ENCODE measurements at regions of chr17 and their contacts with region 1.

Region 1: GRCh38 chr17:55533608-55534007 is 22.4 kb upstream of the SMIM36 start:
- DNase-seq: no peak
- ATAC-seq: no peak

Region 2: DNA sequence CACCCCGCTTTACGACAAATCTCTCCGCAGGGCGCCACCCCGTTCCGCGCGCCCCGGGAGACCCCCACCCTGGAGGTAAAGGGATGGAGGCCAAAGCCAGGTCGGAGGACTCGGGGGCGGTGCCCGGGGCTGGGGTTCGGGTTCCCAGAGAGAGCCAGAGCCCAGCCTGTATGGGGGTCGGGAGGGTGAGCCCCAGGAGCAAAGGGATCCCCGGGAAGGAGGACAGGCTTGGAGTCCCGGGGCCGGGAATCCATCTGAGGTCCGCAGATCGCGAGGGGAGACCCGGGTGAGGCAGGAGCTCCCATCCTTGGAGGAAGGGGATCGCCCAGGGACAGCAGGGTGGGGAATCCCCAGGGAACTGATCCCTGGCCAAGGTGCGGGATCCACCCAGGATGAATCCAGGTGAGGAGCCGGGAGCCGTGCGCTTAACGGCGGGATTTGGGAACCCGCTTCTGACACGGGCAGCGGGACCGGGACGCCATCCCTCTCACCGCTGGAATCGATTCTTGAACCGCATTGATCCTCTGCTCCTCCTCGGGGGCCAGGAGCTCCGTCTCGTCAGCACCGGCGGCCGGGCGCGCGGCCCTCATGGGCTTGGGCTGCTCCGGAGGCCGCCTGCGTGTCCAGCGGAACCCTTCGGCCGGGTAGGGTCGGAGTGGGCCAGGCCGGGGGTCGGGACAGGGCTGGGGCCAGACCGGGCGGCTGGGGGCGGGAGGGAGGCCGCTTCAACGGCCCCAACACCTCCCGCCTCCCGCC is 112.3 kb before region 1 on chr17 and contains the start of gene MMD:
- intact Hi-C with region 1: no loop called
- DNase-seq: no peak
- ATAC-seq: peak; percentile 38
- total RNA-seq, gene MMD: 13.8 TPM

Region 3: DNA sequence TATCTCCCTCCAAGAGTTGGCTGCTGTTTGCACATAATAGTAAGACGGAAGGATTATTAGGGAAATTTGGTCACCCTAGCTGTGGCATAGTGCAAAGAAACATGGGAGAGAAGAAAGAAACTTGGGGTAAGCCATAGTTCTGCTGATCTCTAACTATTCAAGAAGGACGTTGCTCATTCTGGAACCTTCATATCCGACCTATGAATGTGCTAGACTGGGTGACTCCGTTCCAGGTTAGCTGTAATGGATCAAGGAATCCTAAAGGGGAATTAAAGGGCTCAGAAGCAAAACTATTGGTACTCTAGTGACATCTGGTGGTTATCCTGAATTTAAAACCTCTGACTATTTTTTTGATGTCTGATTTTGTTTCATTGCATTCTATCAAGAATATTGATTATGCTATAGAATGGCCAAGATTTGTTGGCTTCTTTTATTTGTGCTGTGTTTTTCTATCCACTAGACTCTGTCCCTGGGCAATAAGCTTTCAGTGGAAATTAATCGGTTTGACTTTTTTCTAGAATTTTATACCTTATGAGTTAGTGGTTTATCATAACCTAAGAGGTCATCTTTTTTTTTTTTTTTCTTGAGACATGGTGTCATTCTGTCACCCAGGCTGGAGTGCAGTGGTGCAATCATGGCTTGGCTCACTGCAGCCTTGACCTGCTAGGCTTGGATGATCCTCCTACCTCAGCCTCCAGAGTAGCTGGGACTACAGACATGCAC is 236.7 kb after region 1 on chr17:
- intact Hi-C with region 1: loop called (anchors 5 kb)
- DNase-seq: no peak
- ATAC-seq: peak; percentile 78

Measured in sciatic nerve (tissue), 2 donors.